ENCODE measurements at regions of chr3 and their contacts with region 1.

Region 1: DNA sequence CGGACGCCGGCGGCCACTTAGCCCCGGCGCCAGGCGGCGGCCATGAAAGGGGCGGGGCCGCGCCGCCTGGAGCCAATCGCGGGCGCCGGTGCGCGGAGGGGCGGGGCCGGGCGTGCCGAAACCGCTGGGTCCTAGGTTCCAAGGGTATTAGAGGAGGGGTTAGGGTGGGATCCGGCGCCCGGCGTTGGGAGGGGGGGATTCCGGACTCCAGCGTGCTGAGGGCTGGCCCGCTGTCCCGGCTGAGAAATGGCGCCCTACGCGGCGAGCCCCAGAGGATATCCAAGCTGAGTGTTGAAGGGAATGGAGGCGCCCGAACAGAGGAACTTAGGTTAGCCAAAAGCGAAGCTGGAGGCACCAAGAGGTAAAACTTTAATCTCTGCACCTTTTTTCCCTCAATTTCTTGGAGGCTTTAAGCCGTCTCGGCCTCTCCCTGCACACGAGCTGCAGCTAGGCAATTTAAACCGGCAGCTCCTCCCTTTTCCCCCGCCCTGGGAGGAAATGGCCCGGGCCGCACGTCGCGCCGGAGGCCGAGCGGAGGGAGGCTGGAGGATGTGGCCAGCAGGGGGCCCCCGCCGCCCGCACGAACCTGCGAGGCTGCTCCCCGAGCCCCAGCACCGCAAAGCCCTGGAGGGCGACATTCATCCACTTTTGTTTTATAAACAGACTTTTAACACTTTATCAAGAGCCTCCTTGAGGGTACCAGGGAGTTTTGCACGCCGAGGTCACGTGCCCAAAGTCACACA is at the start of gene XXYLT1:
- DNase-seq: peak; percentile 96
- ATAC-seq: peak; percentile 81
- H3K4me3 Mint-ChIP-seq: peak within 1 kb of the TSS; percentile 90
- H3K27ac Mint-ChIP-seq: peak within 1 kb of the TSS; percentile 87
- H3K4me1 Mint-ChIP-seq: peaks cover 20% of the 10 kb centered on the region
- H3K27me3 Mint-ChIP-seq: no peaks in the 10 kb centered on the region
- total RNA-seq, gene XXYLT1: 6.8 to 8.3 TPM

Region 2: DNA sequence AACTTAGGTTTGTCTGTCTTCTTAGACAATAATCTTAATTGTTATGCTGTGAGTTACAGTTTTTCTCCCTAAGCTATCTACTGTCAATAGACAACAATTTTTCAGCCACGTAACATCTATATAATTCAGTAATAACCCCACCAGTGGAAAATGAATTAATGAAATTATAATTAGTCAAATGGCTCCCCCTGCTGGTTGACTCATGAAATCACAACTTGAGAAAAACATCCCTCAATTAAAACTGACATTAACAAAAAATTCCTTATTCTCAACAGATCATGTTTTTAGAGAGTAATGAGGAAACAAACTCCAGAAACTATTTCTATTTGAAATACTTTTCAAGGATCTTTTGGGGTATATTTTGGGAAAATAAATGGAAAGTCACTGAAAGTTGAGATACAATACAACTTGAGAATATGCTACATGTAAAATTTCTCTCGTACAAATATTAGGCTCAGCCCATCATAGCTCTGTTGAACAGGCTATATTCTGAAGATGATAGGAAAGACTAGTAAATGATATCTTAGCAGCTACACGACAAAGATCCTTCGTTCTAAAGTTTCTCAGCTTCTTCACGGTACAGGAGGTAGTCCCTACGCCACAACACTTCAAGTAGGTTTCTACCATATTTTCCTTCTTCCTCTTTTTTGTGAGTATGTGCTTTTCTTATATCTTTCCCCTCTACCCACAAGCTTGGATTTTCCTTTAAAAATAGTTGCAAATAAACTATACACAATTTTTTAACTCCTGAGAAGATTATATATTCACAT is 251.2 kb after region 1 on chr3:
- POLR2A ChIA-PET with region 1: interaction called, 10 read pairs
- DNase-seq: no peak
- ATAC-seq: no peak
- H3K4me3 Mint-ChIP-seq: no peak overlapping the region
- H3K27ac Mint-ChIP-seq: no peak overlapping the region
- H3K4me1 Mint-ChIP-seq: peaks cover 28% of the 10 kb centered on the region
- H3K27me3 Mint-ChIP-seq: no peaks in the 10 kb centered on the region